ENCODE measurements at regions of chr11 and their contacts with region 1.

Region 1: DNA sequence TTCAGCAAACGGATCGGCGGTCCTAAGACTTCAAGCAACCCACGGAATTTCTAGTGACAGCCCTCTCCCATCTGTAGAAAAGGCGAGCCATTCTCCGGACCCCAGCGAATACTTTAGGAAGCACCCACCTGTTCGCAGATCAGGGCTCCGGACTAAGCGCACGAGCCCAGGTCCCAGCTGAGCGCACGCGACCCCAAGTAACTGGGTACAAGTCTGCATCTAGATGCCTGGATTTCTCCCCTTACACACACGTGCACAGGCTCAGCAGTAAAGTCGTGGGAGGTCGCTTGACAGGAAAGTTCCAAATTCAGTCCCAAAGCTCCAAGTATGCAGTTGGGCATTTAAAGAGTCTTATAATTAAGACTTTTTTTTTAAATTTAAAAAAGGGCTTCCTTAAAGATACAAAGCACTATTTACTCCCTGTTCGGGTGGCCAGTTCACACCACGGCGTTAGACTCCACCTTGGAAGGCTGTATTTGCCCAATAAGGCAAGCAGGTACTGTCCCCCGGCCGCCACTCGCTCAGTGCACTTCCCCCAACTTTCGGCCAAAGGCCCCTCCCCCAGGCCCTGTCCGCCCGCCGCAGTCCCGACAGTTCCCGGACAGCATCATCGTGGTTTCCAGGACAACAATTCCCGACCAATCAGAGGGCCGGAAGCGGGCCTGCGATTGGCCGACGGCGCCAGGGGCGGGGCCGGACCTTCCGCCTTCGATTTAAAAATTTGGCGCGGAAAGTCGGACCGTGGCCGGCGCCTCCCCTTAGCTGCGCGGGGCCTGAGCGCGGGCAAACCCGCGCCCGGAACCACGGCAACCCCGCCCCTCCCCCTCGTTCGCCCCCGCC is at the start of gene E2F8:
- DNase-seq: peak; percentile 97
- total RNA-seq, gene E2F8: 0.19 TPM in 1 of 2 donors, not detected in the other

Region 2: GRCh38 chr11:19201737-19202605 is 38.7 kb before region 1 on chr11 and contains the start of gene CSRP3:
- intact Hi-C with region 1: no loop called
- DNase-seq: no peak
- total RNA-seq, gene CSRP3: not detected

Region 3: DNA sequence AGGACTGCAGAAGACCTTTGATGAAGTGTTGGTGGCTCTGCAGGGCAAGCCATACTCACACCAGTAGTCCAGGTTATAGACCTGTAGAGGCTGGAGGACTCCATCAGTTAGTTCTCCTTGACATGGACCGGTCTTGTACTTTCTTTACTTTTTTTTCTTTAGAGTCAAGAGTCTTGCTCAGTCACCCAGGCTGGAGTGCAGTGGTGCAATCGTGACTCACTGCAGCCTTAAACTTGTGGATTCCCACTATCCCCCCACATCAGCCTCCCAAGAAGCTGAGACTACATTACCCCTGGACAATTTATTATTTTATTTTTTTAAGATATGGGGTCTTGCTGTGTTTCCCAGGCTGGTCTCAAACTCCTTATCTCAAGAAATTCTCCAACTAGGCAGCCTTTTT is 49.7 kb after region 1 on chr11:
- intact Hi-C with region 1: no loop called
- DNase-seq: no peak

Region 4: GRCh38 chr11:20310137-20310536 is 1069.5 kb after region 1 on chr11:
- intact Hi-C with region 1: no loop called
- DNase-seq: no peak

Region 5: GRCh38 chr11:20374746-20375300 is 1134.2 kb after region 1 on chr11:
- intact Hi-C with region 1: loop called in 1 of 2 experiments (anchors 10 kb)
- DNase-seq: no peak